ENCODE measurements at regions of chr1 and their contacts with region 1.

Region 1: GRCh38 chr1:37859507-37860345 is at the start of gene MTF1:
- DNase-seq: peak; percentile 93 to 94
- H3K4me3 ChIP-seq: peak within 1 kb of the TSS; percentile 62
- H3K4me3 Mint-ChIP-seq: peak within 1 kb of the TSS; percentile 84
- H3K27ac Mint-ChIP-seq: peak within 1 kb of the TSS; percentile 91
- H3K4me1 ChIP-seq: peaks cover 5% of the 10 kb centered on the region; the same call in 1 of the 2 replicates
- H3K4me1 Mint-ChIP-seq: no peaks in the 10 kb centered on the region
- H3K27me3 ChIP-seq: no peaks in the 10 kb centered on the region
- H3K27me3 Mint-ChIP-seq: no peaks in the 10 kb centered on the region
- CTCF ChIP-seq: peak; percentile 64 to 66
- total RNA-seq, gene MTF1: 6.4 and 8.4 TPM in 2 replicates

Region 2: GRCh38 chr1:37811027-37811655 is 48.6 kb before region 1 on chr1:
- CTCF ChIA-PET with region 1: interaction called, 5 read pairs
- POLR2A ChIA-PET with region 1: interaction called, 8 read pairs
- intact Hi-C with region 1: loop called (anchors 5 kb)
- DNase-seq: peak; percentile 66 to 75
- H3K4me3 ChIP-seq: no peak overlapping the region
- H3K4me3 Mint-ChIP-seq: no peak overlapping the region
- H3K27ac Mint-ChIP-seq: no peak overlapping the region
- H3K4me1 ChIP-seq: peaks cover 10% of the 10 kb centered on the region; the same call in 1 of the 2 replicates
- H3K4me1 Mint-ChIP-seq: no peaks in the 10 kb centered on the region
- H3K27me3 ChIP-seq: no peaks in the 10 kb centered on the region
- H3K27me3 Mint-ChIP-seq: no peaks in the 10 kb centered on the region
- CTCF ChIP-seq: peak; percentile 56 to 75

Region 3: GRCh38 chr1:37825506-37825905 is 34.2 kb before region 1 on chr1:
- CTCF ChIA-PET with region 1: no interaction called
- POLR2A ChIA-PET with region 1: no interaction called
- intact Hi-C with region 1: no loop called
- DNase-seq: no peak
- H3K4me3 ChIP-seq: no peak overlapping the region
- H3K4me3 Mint-ChIP-seq: no peak overlapping the region
- H3K27ac Mint-ChIP-seq: no peak overlapping the region
- H3K4me1 ChIP-seq: no peaks in the 10 kb centered on the region
- H3K4me1 Mint-ChIP-seq: no peaks in the 10 kb centered on the region
- H3K27me3 ChIP-seq: no peaks in the 10 kb centered on the region
- H3K27me3 Mint-ChIP-seq: no peaks in the 10 kb centered on the region
- CTCF ChIP-seq: no peak

Measured in Caco-2 (cell line).